Lower leg skin (tissue), 4 donors: ENCODE measurements at regions of chr18 and their contacts with region 1.

Region 1: DNA sequence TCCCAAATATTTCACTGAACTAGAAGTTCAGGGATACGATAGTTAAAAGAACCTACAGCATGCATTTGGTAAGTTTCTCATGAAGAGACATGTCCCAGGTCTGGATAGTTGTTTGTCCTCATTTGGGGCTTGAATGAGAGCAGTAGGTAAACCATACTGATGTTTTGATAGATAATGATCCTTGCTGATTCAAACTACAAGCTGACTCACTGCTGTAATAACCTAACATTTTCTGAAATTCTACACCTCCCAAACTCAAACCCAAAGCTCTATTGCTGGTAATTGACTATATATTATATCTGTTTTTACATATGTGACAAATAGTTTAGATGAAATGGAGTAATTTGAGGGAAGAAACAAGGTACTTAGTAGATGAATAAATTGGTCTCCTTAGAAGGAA is 154.1 kb upstream of the BOD1L2 start:
- DNase-seq: no peak
- H3K4me3 ChIP-seq: no peak overlapping the region
- CTCF ChIP-seq: no peak
- POLR2A ChIP-seq: no peak

Region 2: DNA sequence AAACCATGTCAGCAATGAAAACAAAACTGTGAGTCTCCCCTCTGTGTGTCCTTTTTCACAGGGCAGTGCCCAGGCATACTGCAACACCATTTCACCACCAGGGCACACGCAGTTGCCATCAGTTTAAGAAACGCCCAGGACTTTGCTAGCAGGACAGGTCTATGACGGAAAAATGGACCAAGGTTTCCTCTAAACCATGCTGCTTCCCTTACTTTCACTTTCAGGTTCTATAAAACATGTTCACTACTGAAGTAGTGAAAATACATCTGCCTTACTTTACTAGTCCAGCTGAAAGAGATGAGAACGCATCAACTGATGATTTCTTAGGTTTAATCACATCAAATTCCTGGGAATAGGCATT is 1515.3 kb before region 1 on chr18:
- intact Hi-C with region 1: loop called (anchors 5 kb)
- DNase-seq: no peak
- H3K4me3 ChIP-seq: peak overlapping the region; percentile 13
- CTCF ChIP-seq: no peak
- POLR2A ChIP-seq: no peak

Region 3: DNA sequence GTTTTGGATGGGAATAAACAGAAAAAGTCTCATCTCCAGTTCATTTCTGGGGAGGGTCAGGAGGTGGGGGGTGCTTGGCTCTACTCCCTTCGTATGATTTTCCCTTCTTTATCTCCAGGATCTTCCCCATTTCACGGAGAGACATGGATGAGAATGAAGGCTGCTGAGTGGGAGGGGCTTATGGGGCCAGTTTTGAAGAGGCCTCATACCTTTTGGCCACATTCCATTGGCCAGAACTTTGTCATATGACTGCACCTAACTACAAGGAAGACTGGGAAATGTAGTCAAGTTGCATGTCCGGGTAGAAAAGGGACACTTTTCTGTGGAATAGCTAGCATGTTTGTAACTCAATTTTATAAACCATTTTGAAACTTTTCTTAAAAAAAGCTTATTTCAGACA is 1168.9 kb after region 1 on chr18:
- intact Hi-C with region 1: loop called (anchors 5 kb)
- DNase-seq: peak in 1 of 2 donors; percentile 34
- H3K4me3 ChIP-seq: no peak overlapping the region
- CTCF ChIP-seq: no peak
- POLR2A ChIP-seq: no peak